K562 (cell line): ENCODE measurements at regions of chr15 and their contacts with region 1.

Region 1: GRCh38 chr15:63805993-63806980 is 27.5 kb downstream of the HERC1 start:
- DNase-seq: peak in 3 of 4 experiments; percentile 21 to 79 (median 44)
- ATAC-seq: peak; percentile 95
- H3K4me3 ChIP-seq: no peak overlapping the region
- H3K27ac ChIP-seq: peak overlapping the region; percentile 49; the same call in 2 of the 3 replicates
- H3K4me1 ChIP-seq: peaks cover 6 to 25% of the 10 kb centered on the region in 2 experiments; a peak in 3 of 5 replicates
- H3K27me3 ChIP-seq: no peaks in the 10 kb centered on the region
- CTCF ChIP-seq: no peak
- EP300 ChIP-seq: no peak; the same call in 1 of the 2 replicates
- POLR2A ChIP-seq: no peak
- RAD21 ChIP-seq: no peak

Region 2: DNA sequence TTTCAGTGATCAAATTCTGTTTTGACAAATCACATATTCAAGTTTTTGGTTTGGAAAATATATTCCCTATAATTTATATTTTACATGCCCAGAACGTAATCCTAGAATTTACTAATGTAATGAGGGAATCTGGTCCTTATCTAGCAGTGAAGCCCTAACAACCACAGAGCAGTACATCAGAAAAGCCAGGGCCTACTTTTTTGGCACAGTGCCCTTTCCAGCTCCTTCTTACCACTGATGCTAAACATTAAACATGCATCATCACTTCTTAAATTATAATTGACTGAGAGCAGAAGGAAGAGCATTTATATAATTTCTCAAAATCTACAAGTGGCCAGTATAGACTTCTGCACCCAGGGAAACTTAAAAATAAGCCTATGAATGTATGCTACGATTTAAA is 142.4 kb before region 1 on chr15:
- CTCF ChIA-PET with region 1: no interaction called
- POLR2A ChIA-PET with region 1: no interaction called
- in situ Hi-C with region 1: no loop called
- intact Hi-C with region 1: no loop called
- DNase-seq: no peak
- ATAC-seq: no peak
- H3K4me3 ChIP-seq: no peak overlapping the region
- H3K27ac ChIP-seq: no peak overlapping the region
- H3K4me1 ChIP-seq: no peaks in the 10 kb centered on the region
- H3K27me3 ChIP-seq: no peaks in the 10 kb centered on the region
- CTCF ChIP-seq: no peak
- EP300 ChIP-seq: no peak
- POLR2A ChIP-seq: no peak
- RAD21 ChIP-seq: no peak

Region 3: DNA sequence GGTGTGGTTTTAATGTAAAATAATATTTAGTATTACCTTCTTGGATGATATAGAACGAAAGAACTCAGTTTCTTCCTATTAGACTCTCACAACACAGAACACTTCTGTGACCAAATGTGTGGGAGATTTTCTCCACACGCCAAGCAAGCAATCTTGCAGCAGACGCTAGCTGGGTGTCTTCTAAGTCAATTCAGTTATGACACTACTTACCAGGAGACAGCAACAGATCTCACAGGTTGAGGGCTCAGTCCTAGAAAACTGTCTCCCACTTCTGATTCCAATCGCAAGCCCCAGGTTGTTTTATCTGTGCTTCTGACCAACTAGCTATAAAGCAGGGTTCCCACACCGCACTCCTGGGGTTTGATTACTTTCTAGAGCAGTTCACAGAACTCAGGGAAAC is 13.7 kb before region 1 on chr15:
- CTCF ChIA-PET with region 1: no interaction called
- POLR2A ChIA-PET with region 1: interaction called, 25 read pairs
- in situ Hi-C with region 1: no loop called
- intact Hi-C with region 1: no loop called
- DNase-seq: peak in 2 of 4 experiments; percentile 21 to 64
- ATAC-seq: peak; percentile 71
- H3K4me3 ChIP-seq: 0 out of 2 replicates have a peak overlapping the region, but pooled peaks have one; percentile 30
- H3K27ac ChIP-seq: peak overlapping the region; percentile 89
- H3K4me1 ChIP-seq: peaks cover 0 to 11% of the 10 kb centered on the region in 2 experiments; a peak in 4 of 5 replicates
- H3K27me3 ChIP-seq: no peaks in the 10 kb centered on the region
- CTCF ChIP-seq: no peak
- EP300 ChIP-seq: no peak
- POLR2A ChIP-seq: no peak
- RAD21 ChIP-seq: no peak

Region 4: GRCh38 chr15:63818191-63818590 is 11.9 kb after region 1 on chr15:
- CTCF ChIA-PET with region 1: no interaction called
- POLR2A ChIA-PET with region 1: interaction called, 25 read pairs
- in situ Hi-C with region 1: no loop called
- intact Hi-C with region 1: no loop called
- DNase-seq: peak; percentile 32 to 85 (median 58)
- ATAC-seq: peak; percentile 93
- H3K4me3 ChIP-seq: no peak overlapping the region
- H3K27ac ChIP-seq: peak overlapping the region; percentile 58
- H3K4me1 ChIP-seq: peaks cover 12 to 23% of the 10 kb centered on the region in 2 experiments
- H3K27me3 ChIP-seq: no peaks in the 10 kb centered on the region
- CTCF ChIP-seq: peak; percentile 31 to 55 (median 42); a peak in 3 of 6 replicates
- EP300 ChIP-seq: peak; percentile 49; the same call in 1 of the 2 replicates
- POLR2A ChIP-seq: no peak
- RAD21 ChIP-seq: 0 out of 4 replicates have a peak, but pooled peaks have one; percentile 9 to 11

Region 5: DNA sequence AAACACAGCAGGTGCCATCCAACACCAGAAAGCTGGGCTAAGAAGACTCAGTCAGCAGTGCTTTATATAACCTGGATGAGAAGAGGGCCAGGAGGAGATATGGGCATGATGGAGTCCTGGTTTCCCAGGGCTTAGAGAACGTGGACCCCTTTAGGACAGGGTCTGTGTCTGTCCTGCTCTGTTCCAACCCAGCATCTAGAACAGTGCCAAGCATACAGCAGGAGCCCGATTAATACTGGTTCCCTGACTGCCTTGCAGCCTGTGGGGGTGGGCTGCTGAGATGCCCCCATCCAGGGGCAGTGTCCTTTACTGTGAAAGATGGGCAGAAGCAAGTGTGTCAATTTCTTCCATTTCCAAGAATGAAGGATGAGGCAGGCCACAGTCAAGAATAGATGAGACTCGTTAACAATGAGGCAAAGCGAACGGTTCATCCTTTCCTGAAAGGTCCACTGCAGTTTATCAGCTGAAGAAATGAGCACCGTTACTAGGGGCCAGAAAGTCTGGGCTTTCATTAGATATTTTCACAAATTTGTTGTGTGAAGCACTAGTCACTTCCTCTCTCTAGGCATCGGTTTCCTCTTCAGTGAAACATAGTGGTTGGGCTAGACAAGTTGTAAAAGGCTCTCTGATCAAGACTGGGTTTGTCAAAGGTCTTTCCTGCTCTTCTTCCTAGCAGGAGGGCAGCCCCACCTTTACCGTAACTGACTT is 99.4 kb after region 1 on chr15:
- CTCF ChIA-PET with region 1: no interaction called
- POLR2A ChIA-PET with region 1: no interaction called
- in situ Hi-C with region 1: no loop called
- intact Hi-C with region 1: no loop called
- DNase-seq: no peak
- ATAC-seq: peak; percentile 21
- H3K4me3 ChIP-seq: no peak overlapping the region
- H3K27ac ChIP-seq: peak overlapping the region; percentile 31; the same call in 1 of the 3 replicates
- H3K4me1 ChIP-seq: peaks cover 24 to 29% of the 10 kb centered on the region in 2 experiments
- H3K27me3 ChIP-seq: no peaks in the 10 kb centered on the region
- CTCF ChIP-seq: no peak
- EP300 ChIP-seq: no peak
- POLR2A ChIP-seq: no peak
- RAD21 ChIP-seq: no peak